ENCODE measurements at regions of chr17 and their contacts with region 1.

Region 1: GRCh38 chr17:52420555-52421078 is 262.1 kb upstream of the CA10 start:
- DNase-seq: no peak
- H3K4me3 ChIP-seq: no peak overlapping the region
- H3K27ac ChIP-seq: no peak overlapping the region
- H3K4me1 ChIP-seq: no peaks in the 10 kb centered on the region
- H3K27me3 ChIP-seq: no peaks in the 10 kb centered on the region
- CTCF ChIP-seq: no peak
- EP300 ChIP-seq: no peak
- POLR2A ChIP-seq: no peak

Region 2: DNA sequence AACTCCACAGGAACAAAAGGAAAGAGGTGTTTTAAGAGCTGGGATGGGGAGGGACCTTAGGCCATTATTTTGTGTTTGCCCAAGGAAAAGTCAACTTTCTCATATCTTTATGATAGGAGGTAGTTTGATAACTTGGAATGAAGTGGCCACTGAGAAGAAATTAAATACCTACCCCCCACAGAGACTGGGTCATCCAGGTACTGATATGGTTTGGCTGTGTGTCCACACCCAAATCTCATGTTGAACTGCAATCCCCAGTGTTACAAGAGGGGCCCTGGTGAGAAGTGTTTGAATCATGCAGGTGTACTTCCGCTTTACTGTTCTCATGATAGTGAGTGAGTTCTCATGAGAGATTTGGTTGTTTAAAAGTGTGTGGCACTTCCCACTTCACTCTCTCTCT is 924.2 kb after region 1 on chr17:
- in situ Hi-C with region 1: no loop called
- intact Hi-C with region 1: loop called (anchors 5 kb)
- DNase-seq: no peak
- H3K4me3 ChIP-seq: no peak overlapping the region
- H3K27ac ChIP-seq: no peak overlapping the region
- H3K4me1 ChIP-seq: no peaks in the 10 kb centered on the region
- H3K27me3 ChIP-seq: no peaks in the 10 kb centered on the region
- CTCF ChIP-seq: no peak
- EP300 ChIP-seq: no peak
- POLR2A ChIP-seq: no peak